GM12878 (cell line): ENCODE measurements at regions of chr10 and their contacts with region 1.

Region 1: GRCh38 chr10:112314822-112315474 is 31.7 kb downstream of the TECTB start:
- DNase-seq: no peak
- ATAC-seq: peak; percentile 98
- H3K4me3 ChIP-seq: no peak overlapping the region
- H3K27ac ChIP-seq: no peak overlapping the region
- H3K4me1 ChIP-seq: no peaks in the 10 kb centered on the region
- H3K27me3 ChIP-seq: no peaks in the 10 kb centered on the region; a peak in 2 of 4 replicates
- CTCF ChIP-seq: peak; percentile 81 to 88 (median 82)
- EP300 ChIP-seq: no peak
- POLR2A ChIP-seq: no peak
- RAD21 ChIP-seq: peak; percentile 80

Region 2: GRCh38 chr10:110556969-110557601 is 1757.9 kb before region 1 on chr10:
- CTCF ChIA-PET with region 1: no interaction called
- POLR2A ChIA-PET with region 1: no interaction called
- RAD21 ChIA-PET with region 1: no interaction called
- SMC1A ChIA-PET with region 1: no interaction called
- in situ Hi-C with region 1: no loop called
- intact Hi-C with region 1: loop called (anchors 10 kb)
- DNase-seq: no peak
- ATAC-seq: peak; percentile 99
- H3K4me3 ChIP-seq: no peak overlapping the region
- H3K27ac ChIP-seq: no peak overlapping the region
- H3K4me1 ChIP-seq: no peaks in the 10 kb centered on the region
- H3K27me3 ChIP-seq: no peaks in the 10 kb centered on the region
- CTCF ChIP-seq: peak; percentile 77 to 87 (median 83)
- EP300 ChIP-seq: no peak
- POLR2A ChIP-seq: no peak
- RAD21 ChIP-seq: peak; percentile 58

Region 3: GRCh38 chr10:111756217-111757061 is 558.5 kb before region 1 on chr10:
- CTCF ChIA-PET with region 1: no interaction called
- POLR2A ChIA-PET with region 1: no interaction called
- RAD21 ChIA-PET with region 1: interaction called, 3 read pairs
- SMC1A ChIA-PET with region 1: no interaction called
- in situ Hi-C with region 1: no loop called
- intact Hi-C with region 1: loop called (anchors 2 kb)
- DNase-seq: no peak
- ATAC-seq: peak; percentile 82
- H3K4me3 ChIP-seq: no peak overlapping the region
- H3K27ac ChIP-seq: no peak overlapping the region
- H3K4me1 ChIP-seq: no peaks in the 10 kb centered on the region
- H3K27me3 ChIP-seq: no peaks in the 10 kb centered on the region
- CTCF ChIP-seq: peak; percentile 49 to 57 (median 55)
- EP300 ChIP-seq: no peak
- POLR2A ChIP-seq: no peak
- RAD21 ChIP-seq: peak; percentile 18; the same call in 1 of the 2 replicates

Region 4: DNA sequence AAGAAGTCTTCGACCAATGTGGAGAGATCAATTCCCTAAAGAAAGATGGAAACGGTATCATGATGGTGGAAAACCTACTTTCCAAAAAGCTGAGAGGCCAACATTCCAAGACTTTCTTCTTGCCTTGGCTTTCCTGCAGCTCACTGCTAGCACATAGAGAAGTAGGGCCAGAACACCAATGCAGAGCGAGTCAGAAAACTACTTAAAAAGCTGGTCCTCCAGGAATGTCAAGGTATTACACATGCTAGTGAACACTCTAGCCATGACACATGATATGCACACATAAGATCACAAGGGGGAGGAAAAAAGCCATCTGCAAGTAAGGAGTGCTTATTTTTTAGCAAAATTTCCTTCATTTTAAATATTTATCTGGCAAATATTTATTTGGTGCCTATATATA is 154.1 kb before region 1 on chr10:
- CTCF ChIA-PET with region 1: no interaction called
- POLR2A ChIA-PET with region 1: no interaction called
- RAD21 ChIA-PET with region 1: no interaction called
- SMC1A ChIA-PET with region 1: no interaction called
- in situ Hi-C with region 1: no loop called
- intact Hi-C with region 1: no loop called
- DNase-seq: no peak
- ATAC-seq: no peak
- H3K4me3 ChIP-seq: no peak overlapping the region
- H3K27ac ChIP-seq: no peak overlapping the region
- H3K4me1 ChIP-seq: no peaks in the 10 kb centered on the region
- H3K27me3 ChIP-seq: no peaks in the 10 kb centered on the region
- CTCF ChIP-seq: no peak
- EP300 ChIP-seq: no peak
- POLR2A ChIP-seq: no peak
- RAD21 ChIP-seq: no peak

Region 5: GRCh38 chr10:112343056-112343806 is 28.3 kb after region 1 on chr10:
- CTCF ChIA-PET with region 1: no interaction called
- POLR2A ChIA-PET with region 1: no interaction called
- RAD21 ChIA-PET with region 1: no interaction called
- SMC1A ChIA-PET with region 1: no interaction called
- in situ Hi-C with region 1: no loop called
- intact Hi-C with region 1: no loop called
- DNase-seq: no peak
- ATAC-seq: no peak
- H3K4me3 ChIP-seq: no peak overlapping the region
- H3K27ac ChIP-seq: no peak overlapping the region
- H3K4me1 ChIP-seq: no peaks in the 10 kb centered on the region
- H3K27me3 ChIP-seq: no peaks in the 10 kb centered on the region
- CTCF ChIP-seq: no peak
- EP300 ChIP-seq: no peak
- POLR2A ChIP-seq: no peak
- RAD21 ChIP-seq: no peak

Region 6: DNA sequence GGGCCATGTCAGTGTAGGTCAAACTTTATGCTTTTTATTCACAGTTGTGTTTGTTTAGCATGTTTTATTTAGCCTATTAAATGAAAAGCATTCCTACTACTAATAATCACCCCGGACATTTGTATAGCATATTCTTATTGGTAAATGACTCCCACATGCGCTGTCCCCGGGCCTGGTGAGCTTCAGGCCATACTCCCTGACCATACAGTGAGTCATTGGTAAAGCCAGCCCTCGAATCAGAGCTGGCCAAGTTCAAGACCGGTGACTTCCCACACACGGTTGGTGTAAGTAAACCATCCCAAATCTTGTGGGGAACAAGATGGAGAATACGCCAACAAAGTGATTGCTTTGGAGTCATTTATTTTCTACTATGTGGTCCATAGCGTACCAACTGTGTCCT is 396.4 kb after region 1 on chr10:
- CTCF ChIA-PET with region 1: no interaction called
- POLR2A ChIA-PET with region 1: no interaction called
- RAD21 ChIA-PET with region 1: no interaction called
- SMC1A ChIA-PET with region 1: no interaction called
- in situ Hi-C with region 1: no loop called
- intact Hi-C with region 1: no loop called
- DNase-seq: no peak
- ATAC-seq: no peak
- H3K4me3 ChIP-seq: no peak overlapping the region
- H3K27ac ChIP-seq: no peak overlapping the region
- H3K4me1 ChIP-seq: no peaks in the 10 kb centered on the region
- H3K27me3 ChIP-seq: no peaks in the 10 kb centered on the region
- CTCF ChIP-seq: no peak
- EP300 ChIP-seq: no peak
- POLR2A ChIP-seq: no peak
- RAD21 ChIP-seq: no peak